Naive thymus-derived CD4-positive, alpha-beta T cell (primary cell): ENCODE measurements at regions of chr18 and their contacts with region 1.

Region 1: GRCh38 chr18:741931-742512 is 29.6 kb upstream of the ENOSF1 start:
- DNase-seq: peak in 7 of 9 donors; percentile 27 to 58 (median 49)
- ATAC-seq: peak; percentile 88
- H3K4me3 ChIP-seq: no peak overlapping the region
- H3K4me3 Mint-ChIP-seq: no peak overlapping the region
- H3K27ac ChIP-seq: no peak overlapping the region
- H3K27ac Mint-ChIP-seq: peak overlapping the region in 2 of 9 donors; percentile 38 to 51
- H3K4me1 ChIP-seq: no peaks in the 10 kb centered on the region
- H3K4me1 Mint-ChIP-seq: peaks cover 0 to 10% (median 4%) of the 10 kb centered on the region in 7 donors
- H3K27me3 ChIP-seq: no peaks in the 10 kb centered on the region
- H3K27me3 Mint-ChIP-seq: no peaks in the 10 kb centered on the region

Region 2: DNA sequence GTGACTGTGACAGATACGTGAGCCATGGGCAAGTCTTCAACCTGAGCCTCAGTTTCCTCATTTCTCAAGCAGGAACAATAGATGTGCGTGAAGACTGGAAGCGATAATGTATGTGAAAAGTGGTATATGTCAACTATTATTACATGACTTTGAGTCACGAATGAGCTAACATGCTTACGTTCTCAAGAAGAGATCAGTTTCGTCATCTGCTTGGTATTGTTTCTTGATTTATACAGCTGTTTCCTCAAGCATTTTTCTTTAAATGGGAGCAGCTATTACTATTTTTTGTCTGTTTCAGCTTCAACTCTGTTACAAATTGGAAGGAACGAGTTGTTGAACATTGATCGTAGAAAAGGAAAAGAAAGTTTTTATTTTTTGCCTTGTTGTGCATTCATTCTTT is 425.6 kb before region 1 on chr18:
- CTCF ChIA-PET with region 1: no interaction called
- POLR2A ChIA-PET with region 1: no interaction called
- intact Hi-C with region 1: no loop called
- DNase-seq: no peak
- ATAC-seq: no peak
- H3K4me3 ChIP-seq: no peak overlapping the region
- H3K4me3 Mint-ChIP-seq: no peak overlapping the region
- H3K27ac ChIP-seq: no peak overlapping the region
- H3K27ac Mint-ChIP-seq: no peak overlapping the region
- H3K4me1 ChIP-seq: no peaks in the 10 kb centered on the region
- H3K4me1 Mint-ChIP-seq: no peaks in the 10 kb centered on the region
- H3K27me3 ChIP-seq: no peaks in the 10 kb centered on the region
- H3K27me3 Mint-ChIP-seq: peaks cover 0 to 11% (median 0%) of the 10 kb centered on the region in 5 donors

Region 3: DNA sequence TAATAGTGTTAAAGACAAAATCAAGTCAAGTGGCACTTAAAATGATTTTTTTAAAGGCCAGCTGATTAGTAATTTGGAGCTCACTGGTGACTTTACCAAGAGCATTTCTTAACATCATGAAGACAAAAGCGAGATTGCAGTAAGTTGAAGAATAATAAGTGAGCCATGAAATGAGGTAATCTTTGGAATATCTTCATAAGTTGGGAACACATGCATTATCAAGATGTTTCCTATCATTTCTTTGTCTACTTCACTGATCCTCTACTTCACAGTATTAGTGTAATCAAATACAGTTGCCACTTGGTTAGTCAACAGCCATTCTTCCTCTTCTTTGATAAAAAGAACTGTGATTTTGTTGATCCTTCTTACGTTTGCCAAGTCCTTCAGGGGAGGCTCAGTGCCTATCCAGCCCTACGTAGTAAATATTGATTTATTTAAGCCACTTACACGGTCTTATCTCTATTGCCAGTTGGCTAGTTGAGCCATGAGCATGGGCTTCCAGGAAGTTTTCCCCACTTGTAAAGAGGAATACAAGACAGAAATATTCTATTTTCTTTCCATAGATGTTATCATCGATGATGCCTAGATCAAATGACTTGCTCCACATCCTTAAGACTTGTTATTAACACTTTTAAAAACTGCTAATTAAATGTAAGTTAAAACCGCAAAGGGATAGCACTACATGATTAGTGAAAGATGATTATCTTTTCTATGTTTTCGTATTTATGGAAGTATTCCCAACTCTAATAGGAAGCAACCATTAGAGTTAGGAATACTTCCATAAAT is 23.9 kb after region 1 on chr18:
- CTCF ChIA-PET with region 1: no interaction called
- POLR2A ChIA-PET with region 1: no interaction called
- intact Hi-C with region 1: no loop called
- DNase-seq: no peak
- ATAC-seq: no peak
- H3K4me3 ChIP-seq: no peak overlapping the region
- H3K4me3 Mint-ChIP-seq: no peak overlapping the region
- H3K27ac ChIP-seq: no peak overlapping the region
- H3K27ac Mint-ChIP-seq: peak overlapping the region in 1 of 9 donors; percentile 23
- H3K4me1 ChIP-seq: no peaks in the 10 kb centered on the region
- H3K4me1 Mint-ChIP-seq: peaks cover 6 to 36% (median 27%) of the 10 kb centered on the region in 7 donors
- H3K27me3 ChIP-seq: no peaks in the 10 kb centered on the region
- H3K27me3 Mint-ChIP-seq: no peaks in the 10 kb centered on the region

Region 4: GRCh38 chr18:830315-830901 is 88.4 kb after region 1 on chr18:
- CTCF ChIA-PET with region 1: interaction called, 131 read pairs
- POLR2A ChIA-PET with region 1: interaction called, 6 read pairs
- intact Hi-C with region 1: loop called (anchors 1 kb)
- DNase-seq: peak in 7 of 9 donors; percentile 74 to 88 (median 85)
- ATAC-seq: peak; percentile 89
- H3K4me3 ChIP-seq: peak overlapping the region; percentile 6
- H3K4me3 Mint-ChIP-seq: peak overlapping the region; percentile 44 to 77 (median 66)
- H3K27ac ChIP-seq: peak overlapping the region; percentile 54
- H3K27ac Mint-ChIP-seq: peak overlapping the region; percentile 32 to 91 (median 77)
- H3K4me1 ChIP-seq: peaks cover 15 to 22% of the 10 kb centered on the region in 2 donors
- H3K4me1 Mint-ChIP-seq: peaks cover 10 to 40% (median 36%) of the 10 kb centered on the region in 7 donors
- H3K27me3 ChIP-seq: no peaks in the 10 kb centered on the region
- H3K27me3 Mint-ChIP-seq: peaks cover 0 to 11% (median 0%) of the 10 kb centered on the region in 5 donors

Region 5: DNA sequence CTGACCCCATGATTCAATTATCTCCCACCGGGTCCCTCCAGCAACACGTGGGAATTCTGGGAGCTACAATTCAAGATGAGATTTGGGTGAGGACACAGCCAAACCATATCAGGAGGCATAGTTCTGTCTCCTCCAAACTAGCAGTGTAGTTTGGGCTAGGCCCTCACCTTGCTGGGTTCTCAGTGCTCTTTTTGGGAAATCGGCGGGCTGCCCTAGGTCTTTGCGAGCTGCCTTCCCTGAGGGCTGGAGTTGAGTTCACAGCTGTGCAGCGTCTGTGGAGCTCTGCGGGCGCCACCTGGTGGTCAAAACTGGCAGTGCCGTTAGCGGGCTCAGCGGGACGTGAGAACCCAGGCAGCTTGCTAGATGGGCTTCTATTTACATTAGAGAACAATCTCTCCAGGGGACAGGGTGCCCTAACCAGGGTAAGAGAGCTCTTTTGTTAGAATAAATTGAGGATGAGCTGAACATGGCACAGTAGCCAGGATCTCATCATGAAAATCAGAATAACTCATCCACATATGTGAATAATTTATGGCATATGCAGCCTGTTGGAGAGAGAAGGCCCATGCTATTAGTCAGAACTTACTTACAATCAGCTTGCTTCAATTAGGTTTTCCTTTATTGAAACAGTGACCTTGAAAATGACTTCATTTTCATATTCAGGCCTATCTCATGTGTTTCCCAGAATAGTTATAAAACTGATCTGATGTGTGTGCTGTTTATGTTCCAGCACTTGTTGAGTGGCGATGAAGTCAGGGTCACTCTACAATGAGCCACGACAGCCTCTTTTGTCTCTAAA is 97.4 kb after region 1 on chr18:
- CTCF ChIA-PET with region 1: interaction called, 131 read pairs
- POLR2A ChIA-PET with region 1: no interaction called
- intact Hi-C with region 1: loop called (anchors 1 kb)
- DNase-seq: peak; percentile 55 to 89 (median 80)
- ATAC-seq: peak; percentile 98
- H3K4me3 ChIP-seq: no peak overlapping the region
- H3K4me3 Mint-ChIP-seq: peak overlapping the region in 1 of 10 donors; percentile 15
- H3K27ac ChIP-seq: no peak overlapping the region
- H3K27ac Mint-ChIP-seq: peak overlapping the region in 2 of 9 donors; percentile 19 to 43
- H3K4me1 ChIP-seq: peaks cover 0 to 4% of the 10 kb centered on the region in 2 donors
- H3K4me1 Mint-ChIP-seq: peaks cover 0 to 16% (median 4%) of the 10 kb centered on the region in 7 donors
- H3K27me3 ChIP-seq: no peaks in the 10 kb centered on the region
- H3K27me3 Mint-ChIP-seq: peaks cover 0 to 18% (median 7%) of the 10 kb centered on the region in 5 donors

Region 6: DNA sequence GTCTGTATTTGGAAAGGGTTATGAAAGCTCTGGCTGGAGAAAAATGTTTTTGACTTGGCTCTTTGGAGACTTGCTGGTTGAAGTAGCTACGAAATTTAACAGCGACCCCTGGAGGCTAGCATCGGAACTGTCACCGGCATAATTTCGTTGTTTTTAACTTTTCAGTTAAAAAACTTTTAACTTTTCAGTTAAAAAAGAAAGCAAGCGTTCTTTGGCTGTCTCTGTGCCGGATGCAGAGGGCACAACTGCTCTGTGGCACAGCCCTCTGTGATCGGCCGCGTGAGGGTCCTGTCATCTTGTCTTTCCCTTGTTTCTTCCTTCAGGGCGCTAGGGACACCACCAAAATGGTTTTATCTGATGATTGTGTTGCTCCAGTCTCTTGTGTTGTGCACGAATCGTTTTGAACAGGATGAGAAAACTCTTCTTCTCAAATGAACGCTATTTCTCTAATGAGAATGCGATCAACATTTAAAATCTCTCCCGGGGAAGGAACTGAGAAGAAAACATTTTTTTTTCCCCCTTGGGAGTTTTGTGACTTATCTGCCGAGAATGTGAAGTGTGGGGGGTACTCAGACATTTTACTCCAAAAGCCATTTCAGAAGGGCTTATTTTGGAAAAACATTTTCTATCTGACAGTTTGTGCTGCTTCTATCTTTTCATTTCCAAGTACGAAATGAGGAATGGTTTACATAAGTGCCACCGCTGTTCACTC is 219.8 kb after region 1 on chr18:
- CTCF ChIA-PET with region 1: no interaction called
- POLR2A ChIA-PET with region 1: no interaction called
- intact Hi-C with region 1: loop called in 1 of 2 experiments (anchors 5 kb)
- DNase-seq: peak in 7 of 9 donors; percentile 11 to 50 (median 34)
- ATAC-seq: peak; percentile 27
- H3K4me3 ChIP-seq: peak overlapping the region; percentile 21
- H3K4me3 Mint-ChIP-seq: peak overlapping the region in 8 of 10 donors; percentile 3 to 63 (median 36)
- H3K27ac ChIP-seq: no peak overlapping the region
- H3K27ac Mint-ChIP-seq: no peak overlapping the region
- H3K4me1 ChIP-seq: peaks cover 0 to 3% of the 10 kb centered on the region in 2 donors
- H3K4me1 Mint-ChIP-seq: peaks cover 0 to 10% (median 6%) of the 10 kb centered on the region in 7 donors
- H3K27me3 ChIP-seq: no peaks in the 10 kb centered on the region
- H3K27me3 Mint-ChIP-seq: peaks cover 25 to 39% (median 29%) of the 10 kb centered on the region in 5 donors